AG04449 (cell line): ENCODE measurements at regions of chr2 and their contacts with region 1.

Region 1: GRCh38 chr2:44981136-44982108 is 27.8 kb downstream of the SIX2 start:
- DNase-seq: peak; percentile 12
- H3K4me3 ChIP-seq: no peak overlapping the region
- CTCF ChIP-seq: peak; percentile 84

Region 2: DNA sequence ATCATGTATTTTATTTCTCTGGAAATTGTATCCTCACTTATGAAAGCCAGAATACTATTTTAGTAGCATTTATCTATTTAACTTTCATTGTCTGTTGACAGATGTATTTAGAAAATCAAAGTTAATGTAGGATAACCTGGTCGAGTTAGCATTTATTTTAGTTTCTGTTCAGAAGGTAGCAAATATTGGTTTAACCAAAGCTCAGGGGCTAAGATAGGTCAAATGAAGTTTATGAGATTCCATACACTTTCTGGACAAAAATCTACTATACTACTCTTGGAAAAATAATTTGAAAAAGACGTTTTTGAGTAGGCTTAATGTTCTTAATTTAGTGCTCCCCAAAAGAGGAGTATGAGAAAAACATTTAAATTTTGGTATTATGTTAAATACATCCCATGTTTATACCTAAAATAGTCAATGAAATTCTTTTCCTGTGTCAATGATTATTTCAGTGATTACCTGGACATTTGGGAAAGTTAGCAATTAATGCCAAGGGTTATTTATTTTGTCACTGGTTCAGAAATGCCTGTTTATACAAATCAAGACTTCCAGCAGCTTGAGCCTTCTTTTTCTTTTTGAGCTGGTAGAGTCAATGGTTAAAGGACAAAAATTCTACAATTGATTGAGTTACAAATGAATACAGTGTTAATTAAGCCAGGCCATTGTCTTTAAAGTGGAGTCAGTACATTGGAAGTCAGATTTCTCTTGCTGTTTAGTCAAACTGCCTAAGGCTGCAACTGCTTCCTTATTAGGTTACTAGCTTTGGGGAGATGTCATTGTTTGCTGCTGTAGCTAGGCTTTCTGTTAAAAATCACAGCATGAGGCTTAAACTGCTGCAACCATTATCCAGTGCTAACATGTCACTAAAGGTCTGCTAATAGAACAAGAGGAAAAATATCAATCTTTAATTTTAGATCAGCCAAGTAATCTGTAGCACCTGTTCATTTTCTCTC is 437.4 kb before region 1 on chr2:
- CTCF ChIA-PET with region 1: no interaction called
- POLR2A ChIA-PET with region 1: no interaction called
- DNase-seq: no peak
- H3K4me3 ChIP-seq: no peak overlapping the region
- CTCF ChIP-seq: no peak

Region 3: DNA sequence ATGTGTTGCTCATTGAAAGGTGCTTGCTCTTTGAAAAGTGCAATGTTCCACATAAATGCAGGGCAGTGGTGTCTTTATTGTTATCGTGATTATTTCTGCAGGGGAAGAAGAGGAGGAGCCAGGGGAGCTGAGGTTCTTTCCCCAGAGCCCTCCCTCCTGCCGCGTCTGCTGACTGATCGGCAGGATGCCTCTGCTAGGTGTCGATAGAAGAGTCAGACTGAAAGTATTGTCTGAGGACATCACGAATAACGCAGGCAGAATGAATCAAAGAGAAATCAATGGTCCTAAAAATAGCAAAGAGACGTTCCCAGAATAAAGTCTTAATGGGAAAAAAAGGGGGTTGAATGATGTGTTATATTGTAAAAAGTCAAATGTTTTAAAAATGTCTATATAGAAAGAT is 87.4 kb before region 1 on chr2:
- CTCF ChIA-PET with region 1: no interaction called
- POLR2A ChIA-PET with region 1: no interaction called
- DNase-seq: no peak
- H3K4me3 ChIP-seq: no peak overlapping the region
- CTCF ChIP-seq: no peak

Region 4: GRCh38 chr2:45000921-45001868 is 19.8 kb after region 1 on chr2:
- CTCF ChIA-PET with region 1: interaction called, 39 read pairs
- POLR2A ChIA-PET with region 1: no interaction called
- DNase-seq: no peak
- H3K4me3 ChIP-seq: peak overlapping the region; percentile 38
- CTCF ChIP-seq: no peak

Region 5: DNA sequence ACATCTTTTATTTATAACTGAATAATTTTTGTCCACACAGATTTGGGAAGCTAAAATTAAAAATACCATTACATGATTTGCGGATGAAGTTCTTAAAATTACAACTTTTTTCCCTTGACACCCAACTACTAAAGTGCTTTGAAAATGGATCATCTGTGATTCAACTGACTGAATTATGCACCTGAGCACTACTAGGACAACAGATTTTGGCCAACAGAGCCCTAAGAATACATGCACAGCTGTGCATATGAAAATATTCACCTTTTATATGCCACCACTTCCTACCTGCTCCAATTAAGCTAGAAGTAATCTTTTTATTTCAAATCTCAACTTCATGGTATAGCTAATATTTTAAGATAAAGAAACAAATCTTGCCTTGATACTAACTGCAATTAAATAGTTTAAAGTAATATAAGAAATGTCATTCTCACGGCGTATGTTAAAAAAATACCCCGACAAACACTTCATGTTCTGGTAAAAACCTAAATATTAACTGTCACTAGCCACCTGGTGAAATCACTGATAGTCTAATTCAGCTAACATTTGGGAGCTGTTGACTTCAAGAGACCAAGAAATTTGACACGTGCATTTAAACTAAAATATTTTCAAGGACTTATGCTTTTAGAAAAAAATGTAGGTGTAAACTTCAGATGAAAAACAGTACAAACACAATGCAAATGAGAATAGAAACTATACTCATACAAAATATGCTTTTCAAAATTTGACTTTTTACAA is 476.0 kb after region 1 on chr2:
- CTCF ChIA-PET with region 1: interaction called, 10 read pairs
- POLR2A ChIA-PET with region 1: no interaction called
- DNase-seq: no peak
- H3K4me3 ChIP-seq: no peak overlapping the region
- CTCF ChIP-seq: no peak

Region 6: DNA sequence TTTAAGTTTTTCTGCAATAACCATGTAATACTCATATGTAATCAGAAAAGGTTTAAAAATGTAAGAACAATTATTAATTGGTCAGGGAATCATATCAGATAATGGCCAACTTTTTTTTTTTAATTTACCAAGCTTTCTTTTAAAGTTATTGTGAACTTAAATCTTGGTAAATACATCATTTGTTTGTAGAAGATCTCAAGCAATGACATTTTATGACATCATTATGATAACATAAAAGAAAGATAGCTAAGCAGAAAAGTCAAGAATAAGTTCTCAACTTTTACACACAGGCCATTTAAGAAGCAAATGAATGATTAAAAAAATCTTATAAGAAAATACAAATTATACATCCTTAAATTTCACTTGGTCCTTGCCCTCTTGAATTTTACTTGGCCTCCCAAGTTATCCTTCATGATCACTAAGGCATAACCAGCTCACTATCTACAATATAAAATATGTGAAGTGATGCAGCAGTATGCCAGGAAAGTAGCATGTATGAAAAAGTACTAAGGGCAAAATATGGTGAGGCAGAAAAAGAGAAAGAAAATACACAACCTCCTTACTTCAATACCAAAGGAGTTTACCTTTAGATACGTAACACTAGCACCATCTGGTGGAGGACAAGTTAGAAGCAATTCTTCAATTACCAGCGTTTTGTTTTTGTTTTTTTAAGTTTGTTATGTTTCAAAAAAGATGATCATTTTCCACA is 513.0 kb after region 1 on chr2:
- CTCF ChIA-PET with region 1: interaction called, 365 read pairs
- POLR2A ChIA-PET with region 1: no interaction called
- DNase-seq: peak; percentile 31
- H3K4me3 ChIP-seq: no peak overlapping the region
- CTCF ChIP-seq: peak; percentile 49

Region 7: DNA sequence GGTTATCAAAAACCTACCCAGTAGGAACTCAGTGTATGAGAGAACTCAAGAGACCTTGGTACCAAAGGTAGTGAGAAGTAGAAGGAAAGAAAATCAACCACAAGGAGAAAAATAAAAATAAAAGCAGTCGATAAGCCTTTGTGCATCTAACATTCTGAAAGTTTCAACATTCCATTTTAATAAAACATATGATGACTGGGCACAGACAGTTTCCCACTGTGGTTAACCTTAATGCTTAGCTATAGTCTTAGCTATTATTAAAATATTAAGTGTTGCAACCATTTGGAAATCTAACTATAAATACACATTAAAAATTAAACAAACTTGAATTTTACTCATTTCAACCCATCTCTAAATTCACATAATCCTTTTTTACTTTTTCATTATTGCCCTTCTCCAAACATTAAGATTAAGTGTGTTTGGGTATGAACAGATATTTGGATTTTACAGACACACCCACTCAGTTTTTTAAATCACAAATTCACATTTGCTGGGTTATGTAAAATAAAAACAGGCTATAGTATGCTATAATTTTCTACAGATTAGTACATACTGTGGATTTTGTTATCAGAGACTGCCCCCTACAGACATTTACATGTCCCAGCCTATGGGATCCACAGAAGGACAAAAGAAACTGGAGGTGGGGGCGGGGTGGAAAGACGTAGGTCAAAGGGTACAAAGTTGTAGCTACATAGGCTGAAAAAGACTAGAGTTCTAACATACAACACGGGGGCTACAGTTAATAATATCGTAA is 596.8 kb after region 1 on chr2:
- CTCF ChIA-PET with region 1: interaction called, 25 read pairs
- POLR2A ChIA-PET with region 1: no interaction called
- DNase-seq: no peak
- H3K4me3 ChIP-seq: no peak overlapping the region
- CTCF ChIP-seq: peak; percentile 29